Sciatic nerve (tissue), 2 donors: ENCODE measurements at regions of chr18 and their contacts with region 1.

Region 1: GRCh38 chr18:26956863-26957262 is 91.4 kb upstream of the AQP4 start:
- DNase-seq: no peak
- ATAC-seq: no peak

Region 2: DNA sequence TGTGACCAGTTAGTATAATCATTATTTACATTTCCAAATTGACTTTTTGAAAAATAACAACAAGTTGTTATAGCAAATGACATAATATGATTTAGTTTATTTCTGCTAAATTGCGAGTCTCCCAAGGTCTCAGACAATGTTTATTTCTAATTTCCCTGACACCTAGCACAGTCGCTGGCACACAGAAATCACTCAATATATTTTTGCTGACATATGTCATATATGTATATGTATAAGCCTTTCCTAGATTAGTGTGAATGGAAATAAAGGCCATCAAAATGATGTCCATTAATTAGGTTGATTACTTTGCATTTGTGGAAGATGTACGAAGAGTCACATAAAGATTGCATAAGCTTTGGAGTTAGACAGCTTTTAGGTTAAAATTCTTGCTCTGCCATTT is 1356.7 kb after region 1 on chr18:
- intact Hi-C with region 1: loop called (anchors 5 kb)
- DNase-seq: no peak
- ATAC-seq: no peak